Psoas muscle (tissue), 8 donors: ENCODE measurements at regions of chr22 and their contacts with region 1.

Region 1: DNA sequence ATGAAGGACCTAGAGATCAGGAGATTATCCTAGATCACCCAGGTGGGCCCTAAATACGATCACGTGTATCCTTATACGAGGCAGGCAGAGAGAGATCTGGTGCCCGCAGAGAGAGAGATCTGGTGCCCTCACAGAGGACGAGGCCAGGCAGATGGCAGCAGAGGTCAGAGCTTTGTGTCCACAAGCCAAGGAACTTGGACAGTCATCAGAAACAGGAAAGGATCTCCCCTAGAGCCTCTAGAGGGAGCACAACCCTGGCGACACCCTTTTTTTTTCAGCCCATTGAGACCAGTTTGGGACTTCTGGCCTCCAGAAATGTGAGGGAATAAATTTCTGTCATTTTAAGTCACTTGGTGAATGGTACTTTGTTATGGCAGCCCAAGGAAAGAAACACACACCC is 25.5 kb upstream of the TIMP3 start:
- DNase-seq: no peak
- ATAC-seq: peak in 3 of 4 donors; percentile 46 to 60 (median 49)
- H3K4me3 ChIP-seq: no peak overlapping the region
- H3K27ac ChIP-seq: no peak overlapping the region
- H3K4me1 ChIP-seq: no peaks in the 10 kb centered on the region
- H3K27me3 ChIP-seq: no peaks in the 10 kb centered on the region
- CTCF ChIP-seq: peak; percentile 36

Region 2: GRCh38 chr22:32545801-32546200 is 230.2 kb before region 1 on chr22:
- intact Hi-C with region 1: no loop called
- DNase-seq: no peak
- ATAC-seq: peak in 1 of 4 donors; percentile 55
- H3K4me3 ChIP-seq: no peak overlapping the region
- H3K27ac ChIP-seq: no peak overlapping the region
- H3K4me1 ChIP-seq: no peaks in the 10 kb centered on the region
- H3K27me3 ChIP-seq: peaks cover 0 to 17% (median 0%) of the 10 kb centered on the region in 3 donors
- CTCF ChIP-seq: no peak

Region 3: DNA sequence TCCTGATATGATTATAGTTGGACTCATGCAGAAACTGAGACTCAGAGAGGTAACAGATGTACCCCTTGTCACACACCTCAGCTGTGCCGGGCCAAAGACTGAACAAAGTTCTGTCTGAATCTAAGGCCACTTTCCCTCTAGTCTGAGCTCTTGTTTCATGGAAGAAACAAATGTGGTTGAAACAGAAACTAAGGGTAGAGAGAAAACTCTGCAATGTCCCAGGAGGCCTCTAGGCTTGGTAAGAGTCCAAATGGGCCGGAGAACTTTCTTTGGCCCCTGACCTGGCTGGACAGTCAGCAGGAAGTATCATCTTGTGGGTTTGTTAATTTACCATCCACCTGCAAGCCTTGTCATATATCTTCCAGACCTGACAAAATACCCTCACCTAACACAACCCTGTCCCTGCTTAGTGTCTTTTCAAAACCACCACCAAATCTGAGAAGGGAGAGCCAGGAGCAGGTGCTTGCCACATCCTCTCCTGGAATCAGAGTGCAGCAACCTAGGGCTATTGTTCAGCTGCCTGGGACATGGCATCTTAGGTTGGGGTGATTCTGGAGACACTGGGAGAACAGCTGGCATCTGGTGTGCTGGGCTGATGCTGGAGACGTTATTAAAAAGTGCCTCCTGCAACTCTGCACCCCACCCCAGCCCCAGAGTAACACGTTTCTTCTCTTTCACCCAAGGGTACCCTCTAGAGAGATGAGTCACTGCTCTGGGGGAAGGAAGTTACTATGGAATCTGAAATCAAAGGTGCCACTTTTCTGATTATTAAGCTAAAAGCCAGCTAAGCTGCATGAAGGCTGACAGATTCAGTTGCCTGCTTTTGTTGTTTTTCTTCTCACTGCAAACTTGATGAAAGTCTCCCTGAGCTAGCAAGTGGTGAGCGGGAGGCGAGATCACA is 100.8 kb before region 1 on chr22:
- intact Hi-C with region 1: no loop called
- DNase-seq: peak in 1 of 2 donors; percentile 62
- ATAC-seq: no peak
- H3K4me3 ChIP-seq: no peak overlapping the region
- H3K27ac ChIP-seq: no peak overlapping the region
- H3K4me1 ChIP-seq: no peaks in the 10 kb centered on the region
- H3K27me3 ChIP-seq: peaks cover 0 to 3% (median 2%) of the 10 kb centered on the region in 3 donors
- CTCF ChIP-seq: no peak

Region 4: GRCh38 chr22:32839831-32840584 is 64.1 kb after region 1 on chr22:
- intact Hi-C with region 1: no loop called
- DNase-seq: no peak
- ATAC-seq: peak in 1 of 4 donors; percentile 49
- H3K4me3 ChIP-seq: no peak overlapping the region
- H3K27ac ChIP-seq: peak overlapping the region; percentile 41
- H3K4me1 ChIP-seq: peaks cover 24% of the 10 kb centered on the region
- H3K27me3 ChIP-seq: no peaks in the 10 kb centered on the region
- CTCF ChIP-seq: no peak

Region 5: GRCh38 chr22:32862936-32863661 is 87.1 kb after region 1 on chr22:
- intact Hi-C with region 1: no loop called
- DNase-seq: no peak
- ATAC-seq: no peak
- H3K4me3 ChIP-seq: no peak overlapping the region
- H3K27ac ChIP-seq: no peak overlapping the region
- H3K4me1 ChIP-seq: no peaks in the 10 kb centered on the region
- H3K27me3 ChIP-seq: no peaks in the 10 kb centered on the region
- CTCF ChIP-seq: no peak

Region 6: DNA sequence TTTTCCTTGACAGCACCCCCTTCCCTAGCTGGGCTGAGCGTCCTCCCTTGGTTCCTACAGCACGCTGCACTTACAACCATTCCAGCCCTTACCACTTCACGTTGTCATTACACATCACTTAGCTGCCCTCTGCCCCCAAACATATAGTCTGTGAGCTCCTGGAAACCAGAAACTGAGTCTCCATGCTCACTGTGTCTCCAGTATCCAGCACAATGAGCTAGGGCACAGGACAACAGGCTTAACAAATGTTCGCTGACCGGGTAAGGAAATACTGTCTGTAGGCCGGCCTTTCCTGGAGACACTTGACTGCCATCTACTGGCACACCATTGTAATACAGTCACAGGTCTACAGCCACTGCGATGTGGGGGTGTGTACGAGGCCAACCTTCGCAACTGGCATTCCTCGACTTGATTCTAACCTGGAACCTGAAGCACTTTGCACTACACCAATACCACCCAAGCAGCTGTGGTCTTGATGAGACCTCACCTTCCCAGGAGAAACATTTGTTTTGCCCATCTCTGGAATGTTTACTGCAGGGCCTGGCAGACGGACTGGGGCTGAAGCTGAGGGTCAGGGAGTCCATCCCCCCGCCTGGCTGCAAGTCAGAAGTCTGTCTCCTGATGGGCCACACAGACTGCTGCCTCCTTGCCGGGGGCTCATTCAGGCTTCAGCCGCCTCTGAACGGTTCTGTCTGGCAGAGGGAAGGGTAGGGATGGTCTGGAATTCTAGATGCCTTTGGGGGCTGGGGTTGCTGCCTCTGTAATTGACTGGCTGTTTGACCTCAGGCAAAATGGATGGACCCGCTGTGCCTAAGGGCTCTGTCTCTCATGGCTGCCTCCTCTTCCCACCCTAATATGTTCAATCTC is 210.2 kb after region 1 on chr22:
- intact Hi-C with region 1: loop called in 1 of 2 experiments (anchors 10 kb)
- DNase-seq: peak in 1 of 2 donors; percentile 30
- ATAC-seq: peak; percentile 82 to 97 (median 94)
- H3K4me3 ChIP-seq: no peak overlapping the region
- H3K27ac ChIP-seq: no peak overlapping the region
- H3K4me1 ChIP-seq: no peaks in the 10 kb centered on the region
- H3K27me3 ChIP-seq: peaks cover 0 to 6% (median 0%) of the 10 kb centered on the region in 3 donors
- CTCF ChIP-seq: peak; percentile 85